Activated T-helper 1 cell treated with anti-CD3 and anti-CD28 coated beads, Interleukin-12 subunit alpha, Interleukin-12 subunit beta, Interleukin-2, Interleukin-4 antibody, amounts not matched to agents 30 ng/mL and 10 ng/mL and 1 ng/mL, durations not matched to agents 14 hours and 24 hours and 36 hours (primary cell): ENCODE measurements at regions of chr11 and their contacts with region 1.

Region 1: DNA sequence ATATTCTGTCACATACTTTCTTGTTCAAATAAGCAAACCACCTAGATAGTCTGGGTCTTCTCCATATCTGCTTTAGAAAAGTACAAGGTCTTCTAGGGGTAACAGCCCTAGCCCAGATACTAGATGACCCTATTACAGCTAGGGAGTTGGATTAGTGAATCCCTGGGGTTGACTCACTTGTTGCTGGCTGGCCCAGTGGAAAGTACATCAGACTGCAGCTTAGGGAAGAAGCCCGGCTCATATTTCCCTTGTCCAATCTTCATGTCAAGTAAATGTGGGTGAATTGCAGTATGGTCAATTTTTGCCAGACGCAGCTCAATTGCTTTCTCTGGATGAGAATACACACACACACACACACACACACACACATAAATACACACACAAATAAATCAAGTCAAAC is 79.1 kb upstream of the SCUBE2 start:
- DNase-seq: no peak
- H3K4me3 Mint-ChIP-seq: no peak overlapping the region
- H3K27ac Mint-ChIP-seq: no peak overlapping the region
- H3K4me1 Mint-ChIP-seq: peaks cover 10% of the 10 kb centered on the region
- H3K27me3 Mint-ChIP-seq: no peaks in the 10 kb centered on the region

Region 2: GRCh38 chr11:9103208-9103898 is 67.1 kb before region 1 on chr11:
- intact Hi-C with region 1: no loop called
- DNase-seq: no peak
- H3K4me3 Mint-ChIP-seq: no peak overlapping the region
- H3K27ac Mint-ChIP-seq: no peak overlapping the region
- H3K4me1 Mint-ChIP-seq: no peaks in the 10 kb centered on the region
- H3K27me3 Mint-ChIP-seq: peaks cover 10% of the 10 kb centered on the region

Region 3: DNA sequence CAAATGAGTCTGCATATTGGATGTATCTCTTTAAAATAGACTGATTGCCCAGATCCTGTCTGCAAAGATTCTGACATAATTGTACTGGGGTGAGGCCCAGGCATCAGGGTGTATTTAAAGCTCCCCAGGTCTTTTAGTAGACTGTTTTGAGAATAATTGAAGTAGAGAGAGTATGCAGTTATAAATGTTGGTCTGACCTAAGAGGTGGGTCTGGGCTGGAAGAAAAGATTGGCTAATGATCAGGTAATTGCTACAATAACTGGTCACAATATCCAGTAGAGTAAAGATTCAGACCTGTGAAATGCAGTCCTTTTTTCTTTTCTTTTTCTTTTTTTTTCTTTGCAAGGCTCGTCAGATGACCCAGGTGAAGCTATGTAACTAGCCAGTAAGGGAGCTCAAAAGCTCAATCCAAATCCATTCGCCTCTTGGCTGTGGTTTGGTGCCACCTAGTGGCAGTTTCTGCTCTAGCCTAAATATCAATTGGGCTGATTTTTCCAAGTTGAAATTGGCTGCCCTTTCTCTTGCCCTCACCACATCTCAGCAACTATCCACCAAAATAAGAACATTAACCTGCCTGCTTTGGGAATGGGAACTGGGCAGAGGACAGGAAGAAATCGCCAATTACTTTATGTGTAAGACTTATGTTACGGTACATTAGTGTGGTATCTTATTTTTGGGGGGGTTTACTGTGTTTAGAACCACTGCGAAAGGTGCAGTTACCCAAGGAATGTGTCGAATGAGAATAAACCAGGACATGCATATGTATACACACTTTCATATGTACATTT is 336.2 kb after region 1 on chr11:
- intact Hi-C with region 1: loop called (anchors 1 kb)
- DNase-seq: peak; percentile 68
- H3K4me3 Mint-ChIP-seq: no peak overlapping the region
- H3K27ac Mint-ChIP-seq: no peak overlapping the region
- H3K4me1 Mint-ChIP-seq: peaks cover 6% of the 10 kb centered on the region
- H3K27me3 Mint-ChIP-seq: no peaks in the 10 kb centered on the region